Activated naive CD4-positive, alpha-beta T cell treated with anti-CD3 and anti-CD28 coated beads for 36 hours (primary cell): ENCODE measurements at regions of chr9 and their contacts with region 1.

Region 1: GRCh38 chr9:129962889-129963703 is 79.9 kb downstream of the FNBP1 start:
- DNase-seq: peak; percentile 89
- H3K4me3 Mint-ChIP-seq: peak overlapping the region; percentile 70
- H3K27ac Mint-ChIP-seq: peak overlapping the region; percentile 95
- H3K4me1 Mint-ChIP-seq: peaks cover 78% of the 10 kb centered on the region
- H3K27me3 Mint-ChIP-seq: no peaks in the 10 kb centered on the region

Region 2: DNA sequence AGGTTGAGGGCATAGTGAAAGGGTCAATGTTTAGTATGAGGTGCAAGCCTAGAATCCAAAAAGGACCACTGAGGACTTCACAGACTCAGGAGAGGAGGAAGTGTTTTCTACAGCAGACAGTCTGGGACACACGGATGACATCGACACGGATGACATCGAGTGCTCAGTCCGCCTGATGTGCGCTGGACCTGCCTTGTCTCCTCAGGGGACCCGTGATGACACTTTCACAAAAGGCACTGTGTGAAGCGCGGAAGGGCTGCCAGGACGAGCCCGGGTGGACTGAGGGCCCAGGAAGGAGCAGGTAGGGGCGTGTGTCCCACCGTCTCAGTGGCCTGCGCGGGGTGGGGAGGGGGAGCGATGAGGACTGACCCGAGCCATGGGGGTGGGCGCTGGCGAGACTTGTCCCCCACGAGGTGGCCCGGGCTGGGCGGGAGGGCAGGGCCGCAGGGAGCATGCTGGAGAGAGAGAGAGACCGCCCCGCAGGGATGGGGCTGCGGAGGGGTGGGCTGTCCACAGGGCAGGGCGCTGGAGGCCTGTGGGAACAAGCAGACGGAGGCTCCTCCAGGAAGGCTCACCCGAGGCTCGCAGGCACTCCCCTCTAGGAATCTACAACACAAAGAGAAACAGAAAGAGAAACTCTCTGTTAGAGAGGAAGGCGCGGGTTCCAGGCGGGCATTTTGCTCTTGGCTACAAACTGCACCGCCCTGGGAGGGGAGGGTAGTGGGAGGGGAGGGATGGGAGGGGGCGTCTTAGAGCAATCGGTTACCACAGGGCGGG is 73.0 kb before region 1 on chr9:
- CTCF ChIA-PET with region 1: interaction called, 7 read pairs
- intact Hi-C with region 1: loop called (anchors 1 kb)
- DNase-seq: peak; percentile 92
- H3K4me3 Mint-ChIP-seq: peak overlapping the region; percentile 92
- H3K27ac Mint-ChIP-seq: peak overlapping the region; percentile 99
- H3K4me1 Mint-ChIP-seq: peaks cover 77% of the 10 kb centered on the region
- H3K27me3 Mint-ChIP-seq: no peaks in the 10 kb centered on the region

Region 3: GRCh38 chr9:129932303-129933151 is 30.6 kb before region 1 on chr9:
- CTCF ChIA-PET with region 1: interaction called, 8 read pairs
- intact Hi-C with region 1: loop called (anchors 1 kb)
- DNase-seq: no peak
- H3K4me3 Mint-ChIP-seq: peak overlapping the region; percentile 25
- H3K27ac Mint-ChIP-seq: peak overlapping the region; percentile 84
- H3K4me1 Mint-ChIP-seq: peaks cover 50% of the 10 kb centered on the region
- H3K27me3 Mint-ChIP-seq: no peaks in the 10 kb centered on the region

Region 4: DNA sequence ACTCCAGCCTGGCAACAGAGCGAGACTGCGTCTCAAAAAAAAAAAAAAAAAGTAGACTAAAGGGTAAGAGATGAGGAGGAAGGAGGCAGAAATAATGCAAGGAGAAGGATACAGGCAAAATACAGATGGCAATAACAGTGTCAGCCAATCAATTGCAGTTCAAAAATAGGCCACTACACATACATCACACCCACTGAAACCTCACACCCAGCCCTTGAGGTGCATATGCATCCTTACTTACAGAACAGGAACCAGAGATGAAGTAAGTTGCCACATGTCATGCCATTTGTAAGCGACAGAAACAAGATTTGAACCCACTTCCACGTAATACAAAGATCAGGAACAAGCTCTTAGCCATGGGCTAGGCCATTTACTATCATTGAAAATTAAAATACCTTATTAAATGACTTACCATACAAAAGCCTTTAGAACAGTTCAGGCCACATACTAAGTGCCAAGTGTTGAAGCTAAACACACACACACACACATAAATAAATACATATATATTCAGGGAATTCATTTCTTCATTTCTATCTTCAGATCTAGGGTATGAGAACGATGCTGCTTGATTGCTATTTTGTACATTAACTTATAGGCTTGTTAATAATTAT is 18.5 kb before region 1 on chr9:
- CTCF ChIA-PET with region 1: interaction called, 6 read pairs
- intact Hi-C with region 1: loop called (anchors 1 kb)
- DNase-seq: peak; percentile 81
- H3K4me3 Mint-ChIP-seq: no peak overlapping the region
- H3K27ac Mint-ChIP-seq: peak overlapping the region; percentile 82
- H3K4me1 Mint-ChIP-seq: peaks cover 48% of the 10 kb centered on the region
- H3K27me3 Mint-ChIP-seq: no peaks in the 10 kb centered on the region

Region 5: GRCh38 chr9:130029223-130029973 is 66.3 kb after region 1 on chr9:
- CTCF ChIA-PET with region 1: interaction called, 3 read pairs
- intact Hi-C with region 1: loop called (anchors 2 kb)
- DNase-seq: peak; percentile 68
- H3K4me3 Mint-ChIP-seq: peak overlapping the region; percentile 45
- H3K27ac Mint-ChIP-seq: peak overlapping the region; percentile 85
- H3K4me1 Mint-ChIP-seq: peaks cover 96% of the 10 kb centered on the region
- H3K27me3 Mint-ChIP-seq: no peaks in the 10 kb centered on the region

Region 6: DNA sequence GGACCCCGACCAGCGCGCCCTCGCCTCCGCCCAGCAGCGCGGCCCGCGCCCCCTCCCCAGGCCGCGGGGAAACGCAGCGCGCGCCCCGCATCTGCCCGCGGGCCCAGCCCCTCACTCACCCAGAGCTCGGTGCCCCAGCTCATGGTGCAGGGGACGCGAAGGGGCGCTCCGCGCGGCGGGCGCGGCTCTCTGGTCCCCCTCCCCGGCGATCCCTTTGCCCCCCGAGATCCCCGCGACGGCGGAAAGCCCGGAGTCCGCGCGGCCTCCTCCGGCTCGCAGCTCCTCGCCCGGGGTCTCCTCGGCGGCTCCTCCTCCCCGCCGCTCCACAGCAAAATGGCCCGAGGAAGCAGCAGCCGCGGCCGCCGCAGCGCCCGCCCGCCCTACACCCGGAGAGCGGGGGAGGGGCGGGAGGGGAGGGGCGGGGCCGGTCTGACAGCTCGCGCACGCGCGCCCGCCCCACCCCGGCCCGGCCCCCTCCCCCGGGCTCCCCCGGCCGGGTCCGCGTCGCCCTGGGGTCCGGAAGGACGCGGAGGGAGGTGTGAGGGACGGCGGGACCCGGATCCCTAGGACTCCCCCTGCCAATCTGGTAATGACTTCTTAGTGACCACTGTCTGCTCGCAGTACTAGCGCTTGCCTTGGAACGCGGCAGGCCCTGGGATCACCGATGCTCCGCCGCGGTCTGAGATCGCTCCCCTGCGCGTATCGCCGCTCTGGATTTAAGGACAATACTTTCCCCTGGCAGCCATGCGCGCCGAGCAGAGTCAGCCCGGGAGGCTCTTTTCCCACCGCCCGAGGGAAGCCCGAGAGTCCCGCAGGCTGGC is 79.9 kb after region 1 on chr9 and contains the start of gene FNBP1:
- CTCF ChIA-PET with region 1: interaction called, 5 read pairs
- intact Hi-C with region 1: loop called (anchors 2 kb)
- DNase-seq: peak; percentile 81
- H3K4me3 Mint-ChIP-seq: peak within 1 kb of the TSS; percentile 100
- H3K27ac Mint-ChIP-seq: peak within 1 kb of the TSS; percentile 100
- H3K4me1 Mint-ChIP-seq: peaks cover 39% of the 10 kb centered on the region
- H3K27me3 Mint-ChIP-seq: no peaks in the 10 kb centered on the region
- total RNA-seq, gene FNBP1: 126 to 128 TPM